CD4-positive, alpha-beta memory T cell (primary cell): ENCODE measurements at regions of chr17 and their contacts with region 1.

Region 1: GRCh38 chr17:19362277-19363113 is at the start of gene B9D1:
- DNase-seq: peak; percentile 92 to 96 (median 92)
- H3K4me3 ChIP-seq: peak within 1 kb of the TSS; percentile 70 to 88
- H3K4me3 Mint-ChIP-seq: peak within 1 kb of the TSS; percentile 90 to 96 (median 92)
- H3K27ac ChIP-seq: peak within 1 kb of the TSS; percentile 59
- H3K27ac Mint-ChIP-seq: peak within 1 kb of the TSS; percentile 88 to 95 (median 92)
- H3K4me1 ChIP-seq: peaks cover 6% of the 10 kb centered on the region
- H3K4me1 Mint-ChIP-seq: peaks cover 5 to 19% (median 6%) of the 10 kb centered on the region in 4 donors
- H3K27me3 ChIP-seq: no peaks in the 10 kb centered on the region
- H3K27me3 Mint-ChIP-seq: peaks cover 5 to 10% of the 10 kb centered on the region in 2 donors
- total RNA-seq, gene B9D1: 2.5 to 2.8 TPM

Region 2: GRCh38 chr17:19384701-19385411 is 22.4 kb after region 1 on chr17:
- CTCF ChIA-PET with region 1: interaction called, 15 read pairs
- POLR2A ChIA-PET with region 1: interaction called, 3 read pairs
- intact Hi-C with region 1: no loop called
- DNase-seq: no peak
- H3K4me3 ChIP-seq: no peak overlapping the region
- H3K4me3 Mint-ChIP-seq: no peak overlapping the region
- H3K27ac ChIP-seq: no peak overlapping the region
- H3K27ac Mint-ChIP-seq: peak overlapping the region in 4 of 7 donors; percentile 25 to 83 (median 58)
- H3K4me1 ChIP-seq: no peaks in the 10 kb centered on the region
- H3K4me1 Mint-ChIP-seq: peaks cover 0 to 9% (median 3%) of the 10 kb centered on the region in 4 donors
- H3K27me3 ChIP-seq: no peaks in the 10 kb centered on the region
- H3K27me3 Mint-ChIP-seq: no peaks in the 10 kb centered on the region

Region 3: DNA sequence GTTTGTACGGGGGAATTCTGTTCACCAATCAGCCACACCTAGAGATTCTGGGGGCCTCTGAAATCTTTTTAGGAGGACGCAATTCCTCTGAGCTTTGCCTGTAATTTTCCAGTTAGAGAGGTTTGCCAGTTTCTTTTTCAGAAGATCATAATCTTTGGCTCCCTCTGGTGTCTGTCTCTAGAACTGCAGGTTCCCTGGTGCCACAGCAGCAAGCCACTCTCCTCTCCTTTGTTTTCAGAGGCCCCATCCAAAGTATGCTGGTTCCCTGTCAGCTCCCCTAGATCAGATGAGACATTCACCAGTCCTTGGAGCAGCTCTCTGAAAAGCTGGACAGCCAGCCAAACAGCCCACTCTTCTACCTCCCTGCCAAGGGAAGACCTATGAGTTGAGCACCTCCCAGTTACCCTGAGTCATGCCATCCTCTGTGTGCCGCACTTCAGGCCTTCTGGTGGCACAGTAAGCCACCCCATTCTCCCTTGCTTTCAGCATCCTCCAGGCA is 84.6 kb after region 1 on chr17:
- CTCF ChIA-PET with region 1: interaction called, 133 read pairs
- POLR2A ChIA-PET with region 1: interaction called, 17 read pairs
- intact Hi-C with region 1: no loop called
- DNase-seq: peak; percentile 69 to 79 (median 75)
- H3K4me3 ChIP-seq: no peak overlapping the region
- H3K4me3 Mint-ChIP-seq: no peak overlapping the region
- H3K27ac ChIP-seq: no peak overlapping the region
- H3K27ac Mint-ChIP-seq: no peak overlapping the region
- H3K4me1 ChIP-seq: no peaks in the 10 kb centered on the region
- H3K4me1 Mint-ChIP-seq: peaks cover 0 to 4% (median 3%) of the 10 kb centered on the region in 4 donors
- H3K27me3 ChIP-seq: no peaks in the 10 kb centered on the region
- H3K27me3 Mint-ChIP-seq: peaks cover 12 to 16% of the 10 kb centered on the region in 2 donors

Region 4: DNA sequence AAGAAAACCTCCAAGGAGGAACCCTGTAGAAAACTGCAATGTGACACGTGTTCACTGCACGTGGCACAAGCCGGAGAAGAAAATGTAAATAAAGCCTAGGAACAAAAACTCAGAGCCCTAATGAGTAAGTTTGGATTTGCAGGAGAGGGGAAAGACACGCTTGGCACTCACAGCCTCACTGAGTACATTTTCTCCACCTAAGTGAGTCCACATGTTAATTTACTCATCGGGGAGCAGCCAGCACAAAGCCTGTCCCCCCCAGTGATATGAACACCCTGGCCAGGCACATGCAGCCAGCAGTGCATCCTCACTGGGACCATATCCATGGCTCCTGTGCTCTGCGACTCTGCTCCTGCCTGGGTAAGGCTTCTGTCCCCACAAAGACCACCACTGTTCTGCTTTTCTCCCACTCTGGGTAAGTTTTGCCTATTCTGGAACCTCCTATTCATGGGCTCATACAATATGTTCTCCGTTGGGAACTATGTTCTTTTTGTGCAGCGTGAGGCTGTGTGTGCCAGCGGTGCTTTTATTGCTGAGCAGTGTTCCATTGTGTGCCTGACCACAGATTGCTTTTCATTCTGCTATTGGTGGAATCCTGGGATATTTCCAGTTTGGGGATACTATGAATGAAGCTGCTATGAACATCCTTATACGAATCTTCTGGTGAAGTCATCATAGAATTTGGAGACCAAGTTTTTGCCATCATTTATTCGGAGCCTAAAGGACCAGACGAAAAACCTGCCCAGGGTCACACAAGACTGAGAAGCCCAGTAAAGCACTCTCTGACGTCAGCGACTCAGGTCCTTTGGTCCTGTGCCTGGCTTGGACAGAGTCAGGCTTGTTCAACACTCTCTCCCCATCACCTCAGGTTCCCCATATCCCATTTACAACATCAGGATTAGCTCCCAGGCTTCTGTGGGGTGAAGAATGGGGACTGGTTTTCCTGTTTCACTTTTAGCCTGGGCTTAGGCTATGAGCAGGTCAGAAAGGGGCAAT is 101.8 kb after region 1 on chr17:
- CTCF ChIA-PET with region 1: interaction called, 22 read pairs
- POLR2A ChIA-PET with region 1: interaction called, 3 read pairs
- intact Hi-C with region 1: no loop called
- DNase-seq: no peak
- H3K4me3 ChIP-seq: no peak overlapping the region
- H3K4me3 Mint-ChIP-seq: peak overlapping the region in 6 of 8 donors; percentile 21 to 73 (median 48)
- H3K27ac ChIP-seq: no peak overlapping the region
- H3K27ac Mint-ChIP-seq: peak overlapping the region; percentile 8 to 93 (median 85)
- H3K4me1 ChIP-seq: peaks cover 34% of the 10 kb centered on the region
- H3K4me1 Mint-ChIP-seq: peaks cover 17 to 53% (median 34%) of the 10 kb centered on the region in 4 donors
- H3K27me3 ChIP-seq: no peaks in the 10 kb centered on the region
- H3K27me3 Mint-ChIP-seq: no peaks in the 10 kb centered on the region

Region 5: GRCh38 chr17:19648475-19649406 is 286.2 kb after region 1 on chr17 and contains the start of gene ALDH3A2:
- CTCF ChIA-PET with region 1: interaction called, 12 read pairs
- POLR2A ChIA-PET with region 1: no interaction called
- intact Hi-C with region 1: no loop called
- DNase-seq: peak; percentile 89 to 95 (median 89)
- H3K4me3 ChIP-seq: peak within 1 kb of the TSS; percentile 33 to 86
- H3K4me3 Mint-ChIP-seq: peak within 1 kb of the TSS; percentile 93 to 98 (median 94)
- H3K27ac ChIP-seq: peak within 1 kb of the TSS; percentile 54
- H3K27ac Mint-ChIP-seq: peak within 1 kb of the TSS; percentile 83 to 97 (median 94)
- H3K4me1 ChIP-seq: peaks cover 26% of the 10 kb centered on the region
- H3K4me1 Mint-ChIP-seq: peaks cover 21 to 41% (median 32%) of the 10 kb centered on the region in 4 donors
- H3K27me3 ChIP-seq: no peaks in the 10 kb centered on the region
- H3K27me3 Mint-ChIP-seq: no peaks in the 10 kb centered on the region
- total RNA-seq, gene ALDH3A2: 45.8 to 52.5 TPM

Region 6: GRCh38 chr17:19886116-19886515 is 523.6 kb after region 1 on chr17:
- CTCF ChIA-PET with region 1: no interaction called
- POLR2A ChIA-PET with region 1: no interaction called
- intact Hi-C with region 1: no loop called
- DNase-seq: no peak
- H3K4me3 ChIP-seq: no peak overlapping the region
- H3K4me3 Mint-ChIP-seq: no peak overlapping the region
- H3K27ac ChIP-seq: no peak overlapping the region
- H3K27ac Mint-ChIP-seq: no peak overlapping the region
- H3K4me1 ChIP-seq: no peaks in the 10 kb centered on the region
- H3K4me1 Mint-ChIP-seq: no peaks in the 10 kb centered on the region
- H3K27me3 ChIP-seq: no peaks in the 10 kb centered on the region
- H3K27me3 Mint-ChIP-seq: no peaks in the 10 kb centered on the region